AG04449 (cell line): ENCODE measurements at regions of chr7 and their contacts with region 1.

Region 1: DNA sequence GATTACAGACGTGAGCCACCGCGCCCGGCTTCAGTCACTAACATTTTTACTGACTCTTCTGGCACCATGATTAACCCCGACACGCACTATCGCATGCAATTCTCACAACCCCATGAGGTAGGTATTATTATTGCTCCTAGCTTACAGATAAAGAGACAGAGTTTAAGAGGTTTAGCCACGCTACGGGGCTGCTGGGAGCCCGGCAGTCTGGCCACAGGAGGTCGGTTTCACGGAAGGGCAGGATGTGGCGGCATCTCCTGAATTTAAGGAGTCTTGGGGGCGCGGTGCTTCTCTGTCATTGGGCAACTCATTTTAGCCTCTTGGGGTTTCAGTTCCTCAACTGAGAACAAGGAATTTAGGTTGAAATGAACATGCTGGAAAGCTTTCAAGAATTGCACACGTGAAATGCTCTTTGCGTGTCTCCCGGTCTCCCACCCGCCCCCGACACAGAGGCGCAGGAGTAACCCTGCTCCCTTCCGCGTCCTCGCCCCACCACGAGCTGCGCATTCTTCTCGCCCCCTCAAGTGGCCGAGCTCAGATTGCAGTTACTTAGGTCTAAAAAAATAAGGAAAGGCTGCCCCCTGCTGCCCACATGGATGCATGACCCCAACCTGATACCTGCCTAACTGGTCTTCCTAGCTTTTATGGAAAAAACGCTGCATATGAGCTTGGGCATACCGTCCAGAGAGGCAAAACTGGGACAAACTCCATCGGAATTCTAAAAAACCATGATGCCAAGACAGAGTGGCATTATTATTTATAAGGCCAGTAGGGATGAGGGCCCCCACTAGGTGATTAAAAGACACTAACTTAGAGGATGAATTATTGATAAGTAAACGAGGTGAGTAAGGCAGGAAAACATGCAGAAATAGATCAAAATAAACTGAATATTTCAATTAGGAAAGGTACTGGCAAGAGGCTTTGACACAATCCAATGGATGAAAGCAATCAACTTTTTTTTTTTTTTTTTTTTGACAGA is 12.4 kb downstream of the PRSS2 start:
- DNase-seq: peak; percentile 62
- H3K4me3 ChIP-seq: peak overlapping the region; percentile 44
- CTCF ChIP-seq: peak; percentile 93

Region 2: GRCh38 chr7:142459551-142459963 is 323.7 kb before region 1 on chr7:
- CTCF ChIA-PET with region 1: interaction called, 28 read pairs
- POLR2A ChIA-PET with region 1: no interaction called
- DNase-seq: no peak
- H3K4me3 ChIP-seq: no peak overlapping the region
- CTCF ChIP-seq: peak; percentile 69

Region 3: GRCh38 chr7:142516038-142516501 is 267.1 kb before region 1 on chr7:
- CTCF ChIA-PET with region 1: interaction called, 103 read pairs
- POLR2A ChIA-PET with region 1: no interaction called
- DNase-seq: peak; percentile 29
- H3K4me3 ChIP-seq: no peak overlapping the region
- CTCF ChIP-seq: peak; percentile 68

Region 4: GRCh38 chr7:142587578-142588191 is 195.5 kb before region 1 on chr7:
- CTCF ChIA-PET with region 1: interaction called, 16 read pairs
- POLR2A ChIA-PET with region 1: no interaction called
- DNase-seq: no peak
- H3K4me3 ChIP-seq: no peak overlapping the region
- CTCF ChIP-seq: peak; percentile 71

Region 5: GRCh38 chr7:142632291-142633134 is 150.7 kb before region 1 on chr7:
- CTCF ChIA-PET with region 1: interaction called, 105 read pairs
- POLR2A ChIA-PET with region 1: no interaction called
- DNase-seq: no peak
- H3K4me3 ChIP-seq: no peak overlapping the region
- CTCF ChIP-seq: peak; percentile 65

Region 6: DNA sequence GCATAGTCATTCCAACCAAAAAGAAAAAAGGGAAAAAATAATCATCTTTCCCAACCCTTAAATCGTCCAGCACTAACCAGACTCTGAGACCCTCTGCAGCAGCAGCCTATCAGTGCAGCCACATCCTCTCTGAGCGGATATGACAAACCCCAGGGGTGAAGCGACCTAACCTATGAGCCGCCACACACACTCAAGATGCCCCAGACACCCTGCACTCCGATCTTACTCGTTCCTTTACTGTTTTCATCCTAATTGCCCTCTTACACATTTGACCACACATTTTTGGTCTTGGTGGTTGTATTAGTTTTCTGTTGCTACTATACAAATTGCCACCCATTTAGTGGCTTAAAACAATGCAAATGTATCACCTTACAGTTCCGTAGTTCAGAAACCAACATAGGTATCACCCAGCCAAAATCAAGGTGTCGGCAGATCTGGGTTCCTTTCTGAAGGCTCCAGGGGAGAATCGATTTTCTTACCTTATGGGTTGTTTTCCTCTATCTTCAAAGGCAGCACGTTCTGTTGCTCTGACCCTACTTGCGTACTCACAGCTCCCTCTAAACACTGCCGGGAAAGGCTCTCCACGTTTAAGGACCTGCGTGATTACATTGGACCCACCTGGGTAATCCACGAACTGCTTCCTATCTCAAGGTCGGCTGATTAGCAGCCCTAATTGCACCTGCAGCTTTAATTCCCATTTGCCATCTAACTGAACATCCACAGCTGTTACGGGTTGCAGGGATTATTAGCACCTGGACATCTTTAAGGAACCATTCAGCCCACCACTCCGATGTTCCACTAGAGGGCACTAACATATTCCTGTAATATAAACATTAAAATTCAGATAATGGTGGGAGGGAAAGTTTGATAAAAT is 71.2 kb before region 1 on chr7:
- CTCF ChIA-PET with region 1: interaction called, 29 read pairs
- POLR2A ChIA-PET with region 1: no interaction called
- DNase-seq: no peak
- H3K4me3 ChIP-seq: no peak overlapping the region
- CTCF ChIP-seq: peak; percentile 56

Region 7: DNA sequence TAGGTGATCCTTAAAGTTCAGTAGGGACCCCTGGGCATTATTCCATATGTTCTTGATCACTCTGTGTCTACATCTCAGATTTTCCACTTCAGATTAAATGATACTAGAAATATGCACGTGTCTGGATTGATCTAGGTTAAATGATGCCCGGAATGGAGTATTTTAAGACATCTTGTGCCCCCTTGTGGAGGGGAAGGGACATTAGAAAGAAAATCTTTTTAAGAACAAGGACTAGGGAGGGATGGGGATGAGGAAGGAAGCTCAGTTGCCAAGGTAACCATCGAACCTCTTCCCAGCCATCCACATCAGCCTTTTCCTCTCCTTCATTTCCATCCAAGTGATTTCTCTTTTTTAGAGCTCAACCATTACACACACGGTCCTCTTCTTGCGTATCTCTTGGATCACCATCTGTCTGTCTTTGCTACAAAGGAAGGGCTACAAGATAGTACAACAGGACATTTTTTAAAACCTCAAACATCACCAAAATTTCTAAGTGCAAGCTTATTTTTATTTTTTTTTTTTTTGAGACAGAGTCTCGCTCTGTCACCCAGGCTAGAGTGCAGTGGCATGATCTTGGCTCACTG is 28.0 kb after region 1 on chr7:
- CTCF ChIA-PET with region 1: interaction called, 79 read pairs
- POLR2A ChIA-PET with region 1: interaction called, 4 read pairs
- DNase-seq: no peak
- H3K4me3 ChIP-seq: no peak overlapping the region
- CTCF ChIP-seq: peak; percentile 41

Region 8: GRCh38 chr7:143096146-143096545 is 312.9 kb after region 1 on chr7:
- CTCF ChIA-PET with region 1: no interaction called
- POLR2A ChIA-PET with region 1: no interaction called
- DNase-seq: no peak
- H3K4me3 ChIP-seq: no peak overlapping the region
- CTCF ChIP-seq: no peak